AG04450 (cell line): ENCODE measurements at regions of chr6 and their contacts with region 1.

Region 1: GRCh38 chr6:85678602-85679444 is 36.1 kb upstream of the SYNCRIP start:
- DNase-seq: peak; percentile 97
- H3K4me3 ChIP-seq: peak overlapping the region; percentile 75
- H3K27ac ChIP-seq: peak overlapping the region; percentile 97
- H3K27me3 ChIP-seq: no peaks in the 10 kb centered on the region
- CTCF ChIP-seq: 0 out of 2 replicates have a peak, but pooled peaks have one; percentile 8

Region 2: GRCh38 chr6:85449818-85450759 is 228.7 kb before region 1 on chr6 and contains the start of gene NT5E:
- CTCF ChIA-PET with region 1: no interaction called
- POLR2A ChIA-PET with region 1: interaction called, 12 read pairs
- DNase-seq: no peak
- H3K4me3 ChIP-seq: peak within 1 kb of the TSS; percentile 87
- H3K27ac ChIP-seq: peak within 1 kb of the TSS; percentile 76
- H3K27me3 ChIP-seq: no peaks in the 10 kb centered on the region
- CTCF ChIP-seq: no peak
- polyA plus RNA-seq, gene NT5E: 127 and 164 TPM in 2 replicates

Region 3: GRCh38 chr6:85498596-85499258 is 180.1 kb before region 1 on chr6:
- CTCF ChIA-PET with region 1: no interaction called
- POLR2A ChIA-PET with region 1: no interaction called
- DNase-seq: no peak
- H3K4me3 ChIP-seq: no peak overlapping the region
- H3K27ac ChIP-seq: no peak overlapping the region
- H3K27me3 ChIP-seq: no peaks in the 10 kb centered on the region
- CTCF ChIP-seq: no peak

Region 4: GRCh38 chr6:85620308-85620707 is 58.5 kb before region 1 on chr6:
- CTCF ChIA-PET with region 1: interaction called, 3 read pairs
- POLR2A ChIA-PET with region 1: interaction called, 18 read pairs
- DNase-seq: no peak
- H3K4me3 ChIP-seq: no peak overlapping the region
- H3K27ac ChIP-seq: no peak overlapping the region
- H3K27me3 ChIP-seq: no peaks in the 10 kb centered on the region
- CTCF ChIP-seq: no peak

Region 5: GRCh38 chr6:85642774-85643536 is 35.9 kb before region 1 on chr6 and contains the start of gene SYNCRIP:
- CTCF ChIA-PET with region 1: interaction called, 8 read pairs
- POLR2A ChIA-PET with region 1: interaction called, 582 read pairs
- DNase-seq: peak; percentile 96
- H3K4me3 ChIP-seq: peak within 1 kb of the TSS; percentile 99
- H3K27ac ChIP-seq: peak within 1 kb of the TSS; percentile 100
- H3K27me3 ChIP-seq: no peaks in the 10 kb centered on the region
- CTCF ChIP-seq: no peak
- polyA plus RNA-seq, gene SYNCRIP: 38.5 and 40.4 TPM in 2 replicates

Region 6: DNA sequence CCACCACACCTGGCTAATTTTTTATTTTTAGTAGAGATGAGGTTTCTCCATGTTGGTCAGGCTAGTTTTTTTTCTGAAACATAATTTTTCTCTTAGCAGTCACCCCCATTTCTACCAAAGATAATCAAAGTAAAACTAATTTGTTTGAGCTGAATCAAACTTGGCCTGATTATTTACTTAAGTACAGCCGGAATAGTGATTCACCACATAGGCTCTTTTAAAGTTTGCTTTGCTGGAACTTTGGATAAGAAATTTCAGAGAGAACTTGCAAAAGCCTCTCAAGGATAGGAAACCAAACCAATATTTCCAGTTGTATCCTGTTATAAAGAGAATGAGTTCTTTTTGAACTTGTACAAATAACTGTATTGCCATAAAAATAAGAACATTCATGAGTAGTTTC is 68.8 kb after region 1 on chr6:
- CTCF ChIA-PET with region 1: no interaction called
- POLR2A ChIA-PET with region 1: interaction called, 30 read pairs
- DNase-seq: peak; percentile 52
- H3K4me3 ChIP-seq: no peak overlapping the region
- H3K27ac ChIP-seq: peak overlapping the region; percentile 49
- H3K27me3 ChIP-seq: no peaks in the 10 kb centered on the region
- CTCF ChIP-seq: no peak